ENCODE measurements at regions of chr7 and their contacts with region 1.

Region 1: DNA sequence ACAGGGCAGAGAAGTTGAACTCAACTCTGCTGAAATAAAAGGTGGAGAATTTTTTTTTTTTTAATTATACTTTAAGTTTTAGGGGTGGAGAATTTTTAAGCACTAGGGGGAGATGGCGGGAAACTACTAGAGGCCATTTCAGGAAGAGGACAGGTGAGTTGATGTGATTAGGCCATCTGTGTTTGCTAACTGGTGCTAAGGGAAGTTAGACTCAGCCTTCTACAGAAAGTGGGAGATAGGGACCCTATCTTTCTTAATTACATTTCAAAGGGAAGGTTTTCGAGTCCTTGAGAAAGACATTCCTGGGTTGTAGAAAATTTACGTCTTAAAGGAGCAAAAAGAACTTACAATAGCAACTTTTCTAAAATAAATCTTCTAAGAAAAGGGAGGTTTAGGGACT is 124.8 kb downstream of the LHFPL3 start:
- DNase-seq: no peak
- H3K4me3 ChIP-seq: no peak overlapping the region
- H3K27ac ChIP-seq: no peak overlapping the region
- H3K4me1 ChIP-seq: no peaks in the 10 kb centered on the region
- H3K27me3 ChIP-seq: no peaks in the 10 kb centered on the region
- CTCF ChIP-seq: no peak
- EP300 ChIP-seq: no peak
- POLR2A ChIP-seq: no peak

Region 2: GRCh38 chr7:104341546-104341945 is 111.6 kb before region 1 on chr7:
- in situ Hi-C with region 1: no loop called
- intact Hi-C with region 1: no loop called
- DNase-seq: no peak
- H3K4me3 ChIP-seq: no peak overlapping the region
- H3K27ac ChIP-seq: no peak overlapping the region
- H3K4me1 ChIP-seq: no peaks in the 10 kb centered on the region
- H3K27me3 ChIP-seq: no peaks in the 10 kb centered on the region
- CTCF ChIP-seq: no peak
- EP300 ChIP-seq: no peak
- POLR2A ChIP-seq: no peak

Region 3: DNA sequence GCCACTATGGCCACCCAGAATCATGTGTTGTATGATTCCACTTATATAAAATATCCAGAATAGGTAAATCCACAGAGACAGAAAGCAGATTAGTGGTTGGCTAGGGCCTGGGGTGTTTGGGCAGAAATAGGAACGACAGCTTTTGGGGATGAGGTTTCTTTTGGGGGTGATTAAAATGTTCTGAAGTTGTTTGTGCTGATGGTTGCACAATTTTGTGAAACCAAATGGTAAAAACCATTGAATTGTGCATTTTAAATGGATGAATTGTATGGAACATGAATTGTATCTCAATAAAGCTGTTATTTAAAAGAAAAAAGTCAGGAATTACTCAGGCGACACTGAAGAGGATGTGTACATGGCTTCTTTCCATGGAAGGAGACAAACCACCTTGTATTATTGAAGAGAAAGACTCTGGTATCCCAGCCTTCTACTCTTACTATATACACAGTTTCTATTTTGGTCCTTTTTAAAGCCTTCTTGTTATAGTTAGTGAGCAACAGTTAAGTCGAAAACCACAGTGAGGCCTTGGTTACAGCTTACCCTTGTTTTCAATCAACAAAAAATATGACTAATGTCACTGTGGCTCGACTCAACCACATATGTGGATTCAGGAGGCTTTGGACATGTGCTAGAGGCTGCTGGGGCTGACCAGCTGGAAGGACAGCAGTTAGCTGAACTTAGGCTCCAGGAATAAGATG is 503.7 kb after region 1 on chr7:
- in situ Hi-C with region 1: no loop called
- intact Hi-C with region 1: no loop called
- DNase-seq: no peak
- H3K4me3 ChIP-seq: no peak overlapping the region
- H3K27ac ChIP-seq: peak overlapping the region; percentile 52 to 79 (median 70)
- H3K4me1 ChIP-seq: peaks cover 10 to 61% (median 15%) of the 10 kb centered on the region in 4 donors
- H3K27me3 ChIP-seq: no peaks in the 10 kb centered on the region
- CTCF ChIP-seq: no peak
- EP300 ChIP-seq: no peak
- POLR2A ChIP-seq: no peak

Region 4: GRCh38 chr7:105559926-105560325 is 1106.7 kb after region 1 on chr7:
- in situ Hi-C with region 1: no loop called
- intact Hi-C with region 1: loop called (anchors 5 kb)
- DNase-seq: no peak
- H3K4me3 ChIP-seq: no peak overlapping the region
- H3K27ac ChIP-seq: no peak overlapping the region
- H3K4me1 ChIP-seq: no peaks in the 10 kb centered on the region
- H3K27me3 ChIP-seq: no peaks in the 10 kb centered on the region
- CTCF ChIP-seq: no peak
- EP300 ChIP-seq: no peak
- POLR2A ChIP-seq: no peak

Measured in transverse colon (tissue), 4 donors.